Ascending aorta (tissue), 2 donors: ENCODE measurements at regions of chr11 and their contacts with region 1.

Region 1: DNA sequence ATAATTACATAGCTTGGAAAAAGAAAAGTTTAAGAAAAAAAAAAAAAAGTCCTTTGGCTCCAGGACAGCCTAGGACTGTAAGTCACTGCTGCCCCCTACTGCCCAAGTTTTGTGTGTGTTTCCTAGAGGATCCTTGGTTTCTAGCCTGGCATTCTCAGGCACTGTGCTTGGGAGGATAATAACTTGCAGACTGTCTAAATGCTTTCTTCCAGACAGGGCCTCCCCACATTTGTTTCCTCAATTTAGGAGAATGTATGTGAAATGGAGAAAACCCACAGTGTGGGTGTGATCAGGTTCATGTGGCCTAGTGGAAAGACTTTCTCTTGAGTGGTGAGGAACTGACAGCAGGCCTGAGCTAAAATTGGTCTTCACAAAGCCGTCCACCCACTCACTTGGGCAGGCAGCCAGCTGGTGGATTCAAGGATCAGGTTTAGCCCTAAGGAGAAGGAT is 191.0 kb downstream of the NAV2 start:
- DNase-seq: peak in 1 of 2 donors; percentile 83
- H3K4me3 ChIP-seq: no peak overlapping the region
- H3K27ac ChIP-seq: peak overlapping the region; percentile 19 to 37
- H3K4me1 ChIP-seq: peaks cover 0 to 33% of the 10 kb centered on the region in 2 donors
- H3K27me3 ChIP-seq: no peaks in the 10 kb centered on the region
- CTCF ChIP-seq: peak; percentile 48 to 76 (median 71)

Region 2: DNA sequence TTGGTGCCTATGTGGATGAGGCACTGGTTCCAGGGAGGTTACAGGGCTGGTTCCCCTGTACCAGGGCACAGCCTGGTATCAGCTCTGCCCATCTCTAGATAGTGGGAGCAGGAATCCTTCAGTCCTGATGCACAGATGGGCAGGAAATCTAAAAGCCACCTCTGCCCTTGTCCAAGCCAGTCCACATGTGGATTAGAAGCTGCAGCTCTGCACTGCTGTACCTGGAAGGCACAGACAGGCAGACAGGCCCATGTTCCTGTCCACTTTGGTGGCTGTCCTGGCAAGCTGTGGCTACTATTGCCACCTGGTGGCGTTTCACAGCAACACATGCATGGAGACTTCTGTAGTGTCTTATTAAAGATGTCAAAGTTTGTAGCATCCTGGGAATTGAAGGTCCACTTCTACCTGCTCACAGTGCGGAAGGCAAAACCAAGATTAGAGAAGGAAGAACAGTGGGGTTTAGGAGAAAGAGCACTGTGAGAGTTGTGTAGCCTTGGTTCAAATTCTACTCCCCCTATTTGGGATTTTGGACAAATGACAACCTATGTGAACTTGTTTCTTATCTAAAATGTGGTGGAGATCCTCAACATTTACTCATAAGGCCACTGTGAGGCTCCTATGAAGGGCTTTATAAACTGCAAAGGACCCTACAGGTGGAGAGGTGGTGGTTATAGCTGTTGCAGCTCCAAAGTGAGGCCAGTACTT is 160.9 kb before region 1 on chr11:
- intact Hi-C with region 1: loop called (anchors 5 kb)
- DNase-seq: peak in 1 of 2 donors; percentile 86
- H3K4me3 ChIP-seq: no peak overlapping the region
- H3K27ac ChIP-seq: peak overlapping the region; percentile 47 to 49
- H3K4me1 ChIP-seq: peaks cover 7 to 43% of the 10 kb centered on the region in 2 donors
- H3K27me3 ChIP-seq: no peaks in the 10 kb centered on the region
- CTCF ChIP-seq: peak; percentile 70 to 89 (median 86)

Region 3: DNA sequence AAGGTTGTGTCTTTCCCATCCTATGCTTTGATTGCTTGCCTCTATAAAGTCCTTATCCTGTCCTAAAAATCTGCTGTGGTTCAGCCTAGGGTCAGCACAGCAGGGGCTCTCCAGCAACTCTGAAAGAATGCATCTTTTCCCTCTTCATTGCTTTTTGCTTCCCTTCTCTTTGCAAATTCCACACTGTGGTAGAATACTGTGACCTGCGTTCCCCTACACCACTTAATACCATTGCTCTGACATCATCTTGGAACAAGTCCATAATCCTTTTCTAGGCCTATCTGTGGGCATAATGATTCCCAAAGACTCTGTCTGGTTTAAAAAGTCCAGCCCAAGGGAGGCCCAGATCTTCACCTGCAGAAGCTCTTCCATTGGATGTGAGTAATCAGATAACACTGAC is 13.3 kb before region 1 on chr11:
- intact Hi-C with region 1: no loop called
- DNase-seq: no peak
- H3K4me3 ChIP-seq: no peak overlapping the region
- H3K27ac ChIP-seq: peak overlapping the region; percentile 46 to 66
- H3K4me1 ChIP-seq: peaks cover 7 to 17% of the 10 kb centered on the region in 2 donors
- H3K27me3 ChIP-seq: no peaks in the 10 kb centered on the region
- CTCF ChIP-seq: no peak